H1 (cell line): ENCODE measurements at regions of chr5 and their contacts with region 1.

Region 1: GRCh38 chr5:137461391-137462264 is 37.5 kb downstream of the SPOCK1 start:
- DNase-seq: peak in 1 of 2 experiments; percentile 19
- H3K4me3 ChIP-seq: no peak overlapping the region
- H3K27ac ChIP-seq: no peak overlapping the region
- H3K4me1 ChIP-seq: peaks cover 0 to 3% (median 0%) of the 10 kb centered on the region in 4 experiments; a peak in 1 of 7 replicates
- H3K27me3 ChIP-seq: no peaks in the 10 kb centered on the region
- CTCF ChIP-seq: peak; percentile 36 to 57 (median 55)
- EP300 ChIP-seq: no peak
- POLR2A ChIP-seq: no peak
- RAD21 ChIP-seq: peak; percentile 26 to 43; a peak in 3 of 4 replicates

Region 2: DNA sequence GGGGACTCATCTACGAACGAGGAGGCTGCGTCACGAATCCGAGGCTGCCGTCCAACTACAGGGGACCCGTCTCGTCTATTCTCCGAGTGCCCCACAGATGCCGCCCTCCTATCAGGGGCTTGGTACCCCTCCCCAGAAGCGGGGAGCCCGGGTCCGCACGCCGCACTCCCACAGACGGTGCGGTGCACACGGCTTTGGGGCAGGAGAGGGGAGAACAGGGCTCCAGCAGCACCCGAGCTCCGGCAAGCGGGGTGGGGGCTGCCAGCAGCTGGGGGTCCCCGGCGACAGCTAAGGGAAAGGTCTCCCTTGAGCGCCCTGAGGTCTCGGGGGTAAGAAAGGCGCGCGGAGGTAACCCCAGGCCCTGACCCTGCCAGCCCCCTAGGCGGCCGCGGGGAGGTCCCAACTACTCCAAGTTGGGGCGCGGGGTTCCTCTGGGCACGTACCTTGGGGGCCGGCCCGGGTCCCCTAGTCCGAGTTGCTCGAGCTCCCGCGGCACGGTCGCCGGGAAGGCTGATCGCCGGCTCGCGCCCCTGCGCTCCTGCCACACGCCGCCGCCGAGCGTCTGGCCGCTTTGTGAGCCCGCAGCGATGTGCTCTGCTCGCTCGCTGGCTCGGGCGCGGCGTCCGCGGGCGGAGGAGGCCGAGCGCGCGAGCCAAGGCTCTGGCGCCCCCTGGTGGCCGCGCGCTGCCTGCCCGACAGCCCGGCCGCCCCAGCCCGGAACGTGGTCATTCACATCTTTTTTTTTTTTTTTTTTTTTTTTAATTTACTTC is 37.3 kb after region 1 on chr5 and contains the start of gene SPOCK1:
- CTCF ChIA-PET with region 1: interaction called, 12 read pairs
- POLR2A ChIA-PET with region 1: no interaction called
- DNase-seq: peak; percentile 27 to 87
- H3K4me3 ChIP-seq: peak within 1 kb of the TSS; percentile 50 to 93 (median 74)
- H3K27ac ChIP-seq: no peak within 1 kb of the TSS
- H3K4me1 ChIP-seq: no peaks in the 10 kb centered on the region; a peak in 1 of 7 replicates
- H3K27me3 ChIP-seq: peaks cover 11 to 25% (median 18%) of the 10 kb centered on the region in 4 experiments
- CTCF ChIP-seq: peak; percentile 70 to 85 (median 75)
- EP300 ChIP-seq: no peak
- POLR2A ChIP-seq: 0 out of 3 replicates have a peak, but pooled peaks of 1 of the 2 experiments have one; percentile 32
- RAD21 ChIP-seq: peak; percentile 67 to 82
- total RNA-seq, gene SPOCK1: 14.0 and 18.1 TPM in 2 replicates

Region 3: DNA sequence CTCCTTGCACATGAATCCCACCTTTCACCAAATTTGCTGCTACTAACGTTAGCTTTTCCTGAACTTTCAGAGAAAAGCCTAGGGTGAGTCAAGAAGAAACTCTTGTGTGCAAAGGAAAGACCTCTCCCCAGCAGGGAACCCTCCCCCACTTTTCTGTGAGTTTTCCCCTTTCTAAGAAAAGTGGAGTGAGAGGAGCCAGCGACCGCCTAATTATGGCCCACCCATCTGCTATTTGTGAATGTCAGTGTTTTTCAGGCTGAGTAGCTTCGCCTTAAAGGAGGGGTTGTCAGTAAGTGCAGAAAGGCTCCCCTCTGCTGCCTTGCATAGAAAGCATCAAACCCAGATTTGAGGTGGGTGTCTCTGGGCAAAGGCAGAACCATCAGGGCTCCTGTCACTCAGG is 84.3 kb after region 1 on chr5:
- CTCF ChIA-PET with region 1: no interaction called
- POLR2A ChIA-PET with region 1: no interaction called
- DNase-seq: no peak
- H3K4me3 ChIP-seq: no peak overlapping the region
- H3K27ac ChIP-seq: no peak overlapping the region
- H3K4me1 ChIP-seq: no peaks in the 10 kb centered on the region
- H3K27me3 ChIP-seq: no peaks in the 10 kb centered on the region
- CTCF ChIP-seq: no peak
- EP300 ChIP-seq: no peak
- POLR2A ChIP-seq: no peak
- RAD21 ChIP-seq: no peak

Region 4: DNA sequence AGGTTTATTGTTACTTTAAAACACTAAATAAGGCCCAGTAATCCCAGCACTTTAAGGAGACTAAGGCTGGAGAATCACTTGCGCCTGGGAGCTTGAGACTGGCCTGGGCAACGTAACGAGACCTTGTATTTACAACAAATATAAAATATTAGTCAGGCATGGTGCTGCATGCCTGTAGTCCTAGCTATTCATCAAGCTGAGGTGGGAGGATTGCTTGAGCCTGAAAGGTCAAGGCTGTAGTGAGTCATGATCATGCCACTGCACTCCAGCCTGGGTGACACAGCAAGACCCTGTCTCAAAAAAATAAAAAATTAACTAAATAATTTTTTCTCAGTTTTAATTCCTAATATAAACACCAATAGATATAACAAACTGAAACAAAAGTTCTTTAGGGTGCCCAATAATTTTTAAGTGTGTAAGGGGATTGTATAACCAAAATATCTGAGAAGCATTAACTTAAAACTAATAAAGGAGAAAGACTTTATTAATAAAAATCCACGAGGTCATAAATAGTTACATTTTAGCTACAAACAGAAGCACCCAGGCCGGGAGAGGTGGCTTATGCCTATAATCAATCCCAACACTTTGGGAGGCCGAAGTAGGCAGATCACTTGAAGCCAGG is 538.6 kb after region 1 on chr5:
- CTCF ChIA-PET with region 1: no interaction called
- POLR2A ChIA-PET with region 1: no interaction called
- DNase-seq: no peak
- H3K4me3 ChIP-seq: no peak overlapping the region
- H3K27ac ChIP-seq: no peak overlapping the region
- H3K4me1 ChIP-seq: no peaks in the 10 kb centered on the region
- H3K27me3 ChIP-seq: no peaks in the 10 kb centered on the region
- CTCF ChIP-seq: no peak
- EP300 ChIP-seq: no peak
- POLR2A ChIP-seq: no peak
- RAD21 ChIP-seq: no peak